Posterior vena cava (tissue), 2 donors: ENCODE measurements at regions of chr17 and their contacts with region 1.

Region 1: GRCh38 chr17:82683534-82683933 is 15.0 kb downstream of the RAB40B start:
- DNase-seq: no peak

Region 2: GRCh38 chr17:81291662-81292061 is 1391.9 kb before region 1 on chr17:
- intact Hi-C with region 1: no loop called
- DNase-seq: peak; percentile 89

Region 3: GRCh38 chr17:82658796-82659452 is 24.6 kb before region 1 on chr17:
- intact Hi-C with region 1: loop called in 1 of 2 experiments (anchors 1 kb)
- DNase-seq: peak; percentile 74